ENCODE measurements at regions of chr9 and their contacts with region 1.

Region 1: GRCh38 chr9:105678163-105678562 is 15.9 kb downstream of the TAL2 start:
- DNase-seq: no peak
- H3K4me3 ChIP-seq: no peak overlapping the region
- H3K4me3 Mint-ChIP-seq: no peak overlapping the region
- H3K27ac Mint-ChIP-seq: no peak overlapping the region
- H3K4me1 ChIP-seq: peaks cover 27% of the 10 kb centered on the region
- H3K4me1 Mint-ChIP-seq: peaks cover 17% of the 10 kb centered on the region
- H3K27me3 ChIP-seq: no peaks in the 10 kb centered on the region
- H3K27me3 Mint-ChIP-seq: no peaks in the 10 kb centered on the region
- CTCF ChIP-seq: no peak

Region 2: DNA sequence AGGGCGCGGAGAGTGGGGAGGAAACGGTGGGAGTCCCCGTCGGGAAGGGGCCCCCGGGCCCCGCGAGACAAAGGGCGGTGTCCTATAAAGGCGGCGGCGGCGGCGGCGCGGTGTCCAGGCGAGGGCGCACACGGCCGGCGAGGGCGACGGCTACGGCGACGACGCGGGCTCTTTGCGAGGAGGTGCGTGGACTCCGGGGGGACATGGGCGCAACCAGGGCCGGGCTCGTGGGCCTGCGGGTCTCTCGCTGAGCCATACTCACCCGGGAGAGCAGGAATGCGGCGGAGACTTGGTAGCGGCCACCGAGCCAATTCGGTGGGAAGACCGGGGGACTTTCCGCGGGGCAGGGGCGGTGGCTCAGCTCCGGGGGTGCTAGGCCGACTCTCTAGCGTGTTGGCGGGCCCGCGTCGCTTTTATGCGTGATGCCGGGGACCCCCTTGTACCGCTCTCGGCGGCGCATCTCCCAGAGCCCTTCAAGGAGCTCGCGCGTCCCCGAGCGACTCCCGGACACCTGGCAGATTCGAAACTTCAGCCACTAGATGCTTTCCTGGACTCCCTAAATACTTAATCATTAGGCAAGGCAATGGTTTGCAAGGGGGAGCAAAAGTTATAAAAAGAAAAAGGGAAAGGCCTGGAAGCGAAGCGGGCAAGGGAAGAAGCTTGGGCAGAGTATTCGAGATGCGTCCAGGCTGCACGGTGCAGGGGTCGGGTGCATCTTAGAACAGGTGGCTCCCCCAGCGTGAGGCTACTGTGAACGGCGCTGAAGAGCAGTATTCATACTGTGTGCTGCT is 21.8 kb before region 1 on chr9:
- CTCF ChIA-PET with region 1: no interaction called
- POLR2A ChIA-PET with region 1: no interaction called
- intact Hi-C with region 1: no loop called
- DNase-seq: peak; percentile 50 to 74
- H3K4me3 ChIP-seq: peak overlapping the region; percentile 94
- H3K4me3 Mint-ChIP-seq: peak overlapping the region; percentile 82
- H3K27ac Mint-ChIP-seq: peak overlapping the region; percentile 34
- H3K4me1 ChIP-seq: no peaks in the 10 kb centered on the region
- H3K4me1 Mint-ChIP-seq: peaks cover 7% of the 10 kb centered on the region
- H3K27me3 ChIP-seq: no peaks in the 10 kb centered on the region
- H3K27me3 Mint-ChIP-seq: no peaks in the 10 kb centered on the region
- CTCF ChIP-seq: peak; percentile 4 to 22

Region 3: GRCh38 chr9:105667867-105668266 is 10.3 kb before region 1 on chr9:
- CTCF ChIA-PET with region 1: no interaction called
- POLR2A ChIA-PET with region 1: no interaction called
- intact Hi-C with region 1: loop called (anchors 1 kb)
- DNase-seq: peak; percentile 62 to 74
- H3K4me3 ChIP-seq: no peak overlapping the region
- H3K4me3 Mint-ChIP-seq: peak overlapping the region; percentile 13
- H3K27ac Mint-ChIP-seq: peak overlapping the region; percentile 1
- H3K4me1 ChIP-seq: peaks cover 14% of the 10 kb centered on the region; the same call in 1 of the 2 replicates
- H3K4me1 Mint-ChIP-seq: peaks cover 32% of the 10 kb centered on the region
- H3K27me3 ChIP-seq: no peaks in the 10 kb centered on the region
- H3K27me3 Mint-ChIP-seq: no peaks in the 10 kb centered on the region
- CTCF ChIP-seq: no peak